ENCODE measurements at regions of chr17 and their contacts with region 1.

Region 1: GRCh38 chr17:3647769-3648555 is 11.4 kb downstream of the CTNS start:
- DNase-seq: peak; percentile 55
- ATAC-seq: no peak
- H3K4me3 ChIP-seq: no peak overlapping the region
- H3K4me3 Mint-ChIP-seq: no peak overlapping the region
- H3K27ac ChIP-seq: no peak overlapping the region
- H3K27ac Mint-ChIP-seq: peak overlapping the region; percentile 15
- H3K4me1 ChIP-seq: peaks cover 20 to 28% of the 10 kb centered on the region in 2 donors
- H3K4me1 Mint-ChIP-seq: peaks cover 27% of the 10 kb centered on the region
- H3K27me3 ChIP-seq: no peaks in the 10 kb centered on the region
- H3K27me3 Mint-ChIP-seq: no peaks in the 10 kb centered on the region
- CTCF ChIP-seq: peak; percentile 39

Region 2: DNA sequence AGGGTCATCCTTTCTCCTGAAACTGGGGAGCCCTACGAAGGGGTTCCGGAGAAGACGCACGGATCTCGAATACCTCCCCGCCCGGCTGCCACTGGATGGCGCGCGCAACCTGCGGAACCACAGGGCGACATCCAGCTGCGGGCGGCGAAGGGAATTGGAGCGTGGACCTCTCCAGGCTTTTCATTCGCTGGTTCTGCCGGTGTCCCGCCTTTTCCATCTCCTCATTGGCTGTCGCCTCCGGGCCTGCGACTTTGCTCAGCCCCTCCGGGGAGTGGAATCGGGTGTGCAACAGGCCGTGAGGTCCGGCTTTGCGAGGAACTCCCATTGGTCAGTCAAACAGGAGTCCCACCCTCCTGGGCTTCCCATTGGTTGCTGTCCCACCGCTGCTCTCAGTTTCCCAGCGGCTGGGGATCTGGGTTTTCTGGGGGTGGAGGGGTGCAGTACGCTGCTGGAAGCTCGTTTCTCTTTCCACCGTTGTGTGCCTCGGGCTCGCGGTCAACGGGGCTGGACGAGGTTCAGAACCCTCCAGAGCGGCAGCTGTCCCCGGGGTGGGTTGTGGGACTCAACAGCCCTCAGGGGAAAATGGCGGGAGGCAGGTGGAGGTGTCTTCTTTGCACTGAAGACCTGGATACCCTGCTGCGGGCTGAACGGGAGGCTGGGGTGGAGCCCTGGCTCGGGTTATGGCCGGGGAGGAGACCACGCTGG is 599.0 kb before region 1 on chr17:
- CTCF ChIA-PET with region 1: interaction called, 8 read pairs
- POLR2A ChIA-PET with region 1: interaction called, 5 read pairs
- intact Hi-C with region 1: loop called (anchors 1 kb)
- DNase-seq: peak; percentile 96
- ATAC-seq: peak; percentile 97
- H3K4me3 ChIP-seq: peak overlapping the region; percentile 36 to 84 (median 76)
- H3K4me3 Mint-ChIP-seq: peak overlapping the region; percentile 93
- H3K27ac ChIP-seq: peak overlapping the region in 1 of 2 donors; percentile 7
- H3K27ac Mint-ChIP-seq: peak overlapping the region; percentile 86
- H3K4me1 ChIP-seq: peaks cover 6 to 13% of the 10 kb centered on the region in 2 donors
- H3K4me1 Mint-ChIP-seq: peaks cover 7% of the 10 kb centered on the region
- H3K27me3 ChIP-seq: peaks cover 0 to under 1% (median 0%) of the 10 kb centered on the region in 4 experiments
- H3K27me3 Mint-ChIP-seq: no peaks in the 10 kb centered on the region
- CTCF ChIP-seq: peak; percentile 76

Region 3: DNA sequence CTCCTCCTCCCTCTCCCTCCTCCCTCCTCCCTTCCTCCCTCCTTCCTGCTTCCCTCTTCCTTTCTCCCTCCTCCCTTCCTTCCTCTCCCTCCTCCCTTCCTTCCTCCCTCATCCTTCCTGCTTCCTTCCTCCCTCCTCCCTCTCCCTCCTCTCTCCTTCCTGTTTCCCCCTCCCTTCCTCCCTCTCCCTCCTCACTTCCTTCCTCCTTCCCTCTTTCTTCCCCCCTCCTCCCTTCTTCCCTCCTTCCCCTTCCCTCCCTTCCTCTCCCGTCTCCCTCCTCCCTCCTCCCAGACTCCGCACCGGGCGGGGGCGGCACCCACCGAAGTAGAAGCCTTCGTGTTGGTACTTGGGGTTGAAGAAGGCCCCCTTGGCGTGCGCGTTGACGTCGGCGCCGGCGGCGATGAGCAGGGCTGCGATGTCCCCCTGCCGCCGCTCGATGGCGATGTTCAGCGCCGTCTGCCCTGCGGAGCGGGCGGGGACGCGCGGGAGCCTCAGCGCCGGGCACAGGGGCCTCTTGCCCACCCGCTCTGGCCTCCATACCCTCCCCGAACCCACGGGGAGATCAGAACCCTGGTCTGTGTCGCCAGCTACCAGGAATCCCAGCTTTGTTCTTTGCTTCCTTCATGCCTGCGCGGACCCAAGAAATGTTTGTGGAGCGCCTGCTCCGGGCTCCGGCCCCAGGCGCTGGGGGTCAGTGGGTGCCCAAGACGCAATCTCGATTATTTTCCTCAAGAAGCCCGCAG is 112.5 kb before region 1 on chr17:
- CTCF ChIA-PET with region 1: interaction called, 3 read pairs
- POLR2A ChIA-PET with region 1: no interaction called
- intact Hi-C with region 1: loop called (anchors 5 kb)
- DNase-seq: peak; percentile 77
- ATAC-seq: peak; percentile 95
- H3K4me3 ChIP-seq: peak overlapping the region in 4 of 5 experiments; percentile 12 to 48 (median 30)
- H3K4me3 Mint-ChIP-seq: peak overlapping the region; percentile 70
- H3K27ac ChIP-seq: no peak overlapping the region
- H3K27ac Mint-ChIP-seq: peak overlapping the region; percentile 32
- H3K4me1 ChIP-seq: peaks cover 6 to 15% of the 10 kb centered on the region in 2 donors
- H3K4me1 Mint-ChIP-seq: peaks cover 19% of the 10 kb centered on the region
- H3K27me3 ChIP-seq: peaks cover 0 to 7% (median 0%) of the 10 kb centered on the region in 4 experiments
- H3K27me3 Mint-ChIP-seq: no peaks in the 10 kb centered on the region
- CTCF ChIP-seq: peak; percentile 71

Region 4: DNA sequence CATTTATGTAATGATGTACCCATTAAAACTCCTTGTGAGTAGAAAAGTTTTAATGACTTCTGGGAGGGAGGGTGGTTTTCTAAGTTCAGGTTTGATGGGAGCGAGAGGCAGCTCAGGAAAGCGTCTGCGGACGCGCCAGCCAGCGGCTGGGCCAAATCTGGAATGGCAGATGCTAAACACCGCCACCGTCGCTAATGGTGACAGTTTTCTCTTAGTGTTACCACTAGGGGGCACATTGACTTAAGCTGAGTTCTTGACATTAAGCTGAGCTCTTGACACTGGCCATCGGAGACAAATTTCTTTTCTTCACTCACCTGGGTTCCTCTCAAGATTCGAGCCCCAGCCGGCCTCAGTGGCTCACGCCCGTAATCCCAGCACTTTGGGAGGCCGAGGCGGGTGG is 45.5 kb before region 1 on chr17:
- CTCF ChIA-PET with region 1: interaction called, 11 read pairs
- POLR2A ChIA-PET with region 1: no interaction called
- intact Hi-C with region 1: no loop called
- DNase-seq: peak; percentile 58
- ATAC-seq: peak; percentile 60
- H3K4me3 ChIP-seq: no peak overlapping the region
- H3K4me3 Mint-ChIP-seq: no peak overlapping the region
- H3K27ac ChIP-seq: no peak overlapping the region
- H3K27ac Mint-ChIP-seq: no peak overlapping the region
- H3K4me1 ChIP-seq: no peaks in the 10 kb centered on the region
- H3K4me1 Mint-ChIP-seq: peaks cover 2% of the 10 kb centered on the region
- H3K27me3 ChIP-seq: no peaks in the 10 kb centered on the region
- H3K27me3 Mint-ChIP-seq: no peaks in the 10 kb centered on the region
- CTCF ChIP-seq: peak; percentile 43